Dorsolateral prefrontal cortex (tissue), 120 donors: ENCODE measurements at regions of chr6 and their contacts with region 1.

Region 1: DNA sequence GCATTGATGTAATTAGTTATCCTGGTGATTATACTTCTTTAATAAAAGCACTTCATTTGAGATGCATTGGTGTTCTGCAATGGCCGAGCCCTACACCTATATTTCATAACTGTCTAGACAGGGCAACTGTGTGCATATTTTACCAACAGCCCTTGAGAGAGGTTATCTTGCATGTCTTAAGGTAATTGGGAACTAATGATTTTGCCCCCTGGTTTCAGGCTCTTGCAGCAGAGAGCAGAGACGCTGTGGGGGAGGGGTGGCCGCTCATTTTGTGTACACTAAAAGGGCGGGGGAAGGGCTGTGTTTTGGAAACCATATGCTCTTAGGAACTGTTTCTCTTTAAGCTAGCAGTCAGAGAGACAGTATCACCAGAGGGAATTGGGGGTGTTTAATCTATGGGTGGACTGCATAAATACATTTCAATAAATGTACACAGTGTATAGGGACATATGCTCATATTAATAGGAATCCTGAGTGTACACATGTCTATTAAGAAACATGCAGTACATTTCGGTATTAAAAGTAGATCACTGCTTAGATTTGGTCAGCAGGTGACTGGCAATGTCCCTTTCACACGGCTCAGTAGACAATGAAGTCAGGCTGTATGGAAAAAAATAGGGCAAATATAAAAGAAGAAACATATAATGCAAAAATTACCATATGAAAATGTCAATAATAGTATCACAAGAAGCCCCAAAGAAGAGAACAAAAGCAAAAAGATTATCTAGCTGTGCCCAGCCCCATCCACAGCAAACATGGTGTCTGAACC is 402.9 kb upstream of the CITED2 start:
- DNase-seq: peak in 1 of 10 donors; percentile 22
- H3K4me3 ChIP-seq: no peak overlapping the region
- H3K27ac ChIP-seq: peak overlapping the region in 12 of 59 donors; percentile 1 to 66 (median 40)
- H3K27me3 ChIP-seq: peaks cover 0 to 3% (median 0%) of the 10 kb centered on the region in 45 donors
- CTCF ChIP-seq: no peak

Region 2: GRCh38 chr6:139500977-139501376 is 276.4 kb before region 1 on chr6:
- intact Hi-C with region 1: no loop called
- DNase-seq: no peak
- H3K4me3 ChIP-seq: no peak overlapping the region
- H3K27ac ChIP-seq: no peak overlapping the region
- H3K27me3 ChIP-seq: no peaks in the 10 kb centered on the region
- CTCF ChIP-seq: no peak

Region 3: GRCh38 chr6:139788303-139788702 is 10.9 kb after region 1 on chr6:
- intact Hi-C with region 1: loop called in 1 of 2 experiments (anchors 1 kb)
- DNase-seq: no peak
- H3K4me3 ChIP-seq: no peak overlapping the region
- H3K27ac ChIP-seq: no peak overlapping the region
- H3K27me3 ChIP-seq: no peaks in the 10 kb centered on the region
- CTCF ChIP-seq: no peak